Head of caudate nucleus (tissue), 42 donors: ENCODE measurements at regions of chrX and their contacts with region 1.

Region 1: DNA sequence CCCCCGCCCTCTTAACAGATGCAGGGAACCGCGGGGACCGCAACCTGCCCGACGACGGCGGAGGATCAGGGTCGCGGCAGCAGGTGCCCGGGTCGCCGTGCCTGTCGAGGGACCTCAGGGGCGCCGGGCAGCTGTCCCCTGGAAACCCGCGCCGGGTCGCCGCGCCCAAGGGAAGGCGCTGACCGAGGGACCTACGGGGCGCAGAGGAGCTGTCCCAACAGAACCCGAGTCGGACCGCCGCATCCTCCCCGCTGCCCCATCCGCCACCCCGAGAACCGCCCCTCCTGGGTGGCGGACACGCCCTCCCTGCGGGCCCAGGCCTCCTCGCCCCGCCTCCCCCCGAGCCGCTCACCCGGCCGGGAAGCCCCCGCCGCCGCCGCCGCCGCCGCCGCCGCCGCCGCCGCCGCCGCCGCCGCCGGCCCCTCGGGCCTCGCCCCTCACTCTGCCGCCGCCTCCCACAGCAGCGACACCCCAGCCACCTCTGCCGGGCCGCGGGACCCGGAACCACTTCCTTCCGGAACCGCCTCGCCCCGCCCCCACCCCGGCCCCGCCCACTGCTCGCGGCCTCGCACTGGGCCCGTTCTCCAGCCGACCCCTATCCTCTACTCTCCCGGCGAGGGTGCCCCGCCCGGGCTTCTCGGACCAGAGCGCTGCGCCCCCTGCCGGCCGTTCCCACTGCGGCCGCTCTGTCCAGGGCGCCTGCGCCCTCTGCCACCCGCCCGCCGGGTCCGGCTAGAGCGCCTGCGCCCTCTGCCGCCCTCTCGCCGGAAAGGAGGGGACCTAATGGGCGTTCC is at the start of gene BCLAF3:
- DNase-seq: peak; percentile 55 to 94 (median 87)

Region 2: GRCh38 chrX:19904778-19905367 is 85.9 kb before region 1 on chrX:
- intact Hi-C with region 1: loop called (anchors 10 kb)
- DNase-seq: peak in 10 of 42 donors; percentile 4 to 46 (median 21)

Region 3: GRCh38 chrX:20300822-20301221 is 310.1 kb after region 1 on chrX:
- intact Hi-C with region 1: no loop called
- DNase-seq: no peak